ENCODE measurements at regions of chr16 and their contacts with region 1.

Region 1: DNA sequence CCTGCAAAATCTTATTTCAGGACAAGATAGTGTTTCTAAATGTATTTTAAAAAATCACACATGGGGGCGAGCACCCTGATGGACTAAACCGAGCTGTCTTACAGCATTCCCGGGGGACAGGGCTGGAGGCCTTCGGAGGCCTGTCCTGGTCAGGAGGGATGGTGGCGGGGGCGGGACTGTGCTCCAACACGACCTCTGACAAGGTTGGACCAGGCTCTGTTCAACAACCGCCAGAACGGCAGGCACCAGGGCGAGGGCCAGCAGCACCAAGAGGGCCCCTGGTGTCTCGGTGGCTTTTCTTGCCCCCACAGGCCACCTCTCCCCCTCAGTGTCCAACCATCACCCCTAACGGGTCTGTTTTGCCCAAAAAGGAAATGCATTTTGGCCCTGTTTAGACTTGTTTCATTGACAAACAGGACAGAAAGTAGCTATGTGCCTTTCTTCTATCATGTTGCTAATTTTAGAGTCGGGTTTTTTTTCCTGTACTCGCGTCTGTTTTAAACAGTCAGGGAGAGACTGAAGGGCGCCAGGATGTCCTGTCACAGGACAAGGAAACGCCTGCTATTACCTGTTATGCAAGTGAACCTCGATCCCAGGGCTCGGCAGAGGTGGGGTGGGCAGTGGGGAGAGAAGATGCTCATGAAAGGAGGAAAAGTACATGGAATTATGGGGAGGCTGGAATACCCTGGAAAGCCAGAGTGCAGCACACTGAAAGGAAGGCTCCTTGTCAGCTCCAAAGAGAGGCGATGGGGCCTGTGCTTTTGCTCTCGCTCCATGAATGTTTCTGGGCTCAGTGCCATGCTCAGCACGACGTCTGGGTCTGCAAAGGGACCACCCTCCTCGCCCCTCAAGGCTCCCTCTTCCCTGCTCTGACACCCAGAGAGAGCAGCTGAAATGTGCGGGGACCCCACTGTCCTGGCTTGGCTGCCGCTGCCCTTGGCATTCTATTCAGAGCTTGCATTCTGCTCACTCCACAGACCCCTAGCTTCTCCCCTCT is 11.9 kb downstream of the TMEM204 start:
- DNase-seq: peak; percentile 72 to 89 (median 89)
- ATAC-seq: peak; percentile 54 to 66
- H3K4me3 ChIP-seq: no peak overlapping the region
- H3K27ac ChIP-seq: peak overlapping the region; percentile 98
- H3K4me1 ChIP-seq: peaks cover 19% of the 10 kb centered on the region
- H3K27me3 ChIP-seq: no peaks in the 10 kb centered on the region

Region 2: GRCh38 chr16:1466968-1467521 is 78.3 kb before region 1 on chr16:
- intact Hi-C with region 1: no loop called
- DNase-seq: peak in 2 of 3 donors; percentile 57 to 68
- ATAC-seq: no peak
- H3K4me3 ChIP-seq: no peak overlapping the region
- H3K27ac ChIP-seq: no peak overlapping the region
- H3K4me1 ChIP-seq: no peaks in the 10 kb centered on the region
- H3K27me3 ChIP-seq: no peaks in the 10 kb centered on the region

Region 3: GRCh38 chr16:1610276-1611017 is 65.1 kb after region 1 on chr16:
- intact Hi-C with region 1: loop called in 1 of 4 experiments (anchors 5 kb)
- DNase-seq: peak; percentile 89 to 96 (median 96)
- ATAC-seq: peak; percentile 78 to 82
- H3K4me3 ChIP-seq: peak overlapping the region; percentile 72
- H3K27ac ChIP-seq: peak overlapping the region; percentile 55
- H3K4me1 ChIP-seq: no peaks in the 10 kb centered on the region
- H3K27me3 ChIP-seq: no peaks in the 10 kb centered on the region

Measured in right cardiac atrium (tissue), 5 donors.